MCF 10A (cell line): ENCODE measurements at regions of chr12 and their contacts with region 1.

Region 1: DNA sequence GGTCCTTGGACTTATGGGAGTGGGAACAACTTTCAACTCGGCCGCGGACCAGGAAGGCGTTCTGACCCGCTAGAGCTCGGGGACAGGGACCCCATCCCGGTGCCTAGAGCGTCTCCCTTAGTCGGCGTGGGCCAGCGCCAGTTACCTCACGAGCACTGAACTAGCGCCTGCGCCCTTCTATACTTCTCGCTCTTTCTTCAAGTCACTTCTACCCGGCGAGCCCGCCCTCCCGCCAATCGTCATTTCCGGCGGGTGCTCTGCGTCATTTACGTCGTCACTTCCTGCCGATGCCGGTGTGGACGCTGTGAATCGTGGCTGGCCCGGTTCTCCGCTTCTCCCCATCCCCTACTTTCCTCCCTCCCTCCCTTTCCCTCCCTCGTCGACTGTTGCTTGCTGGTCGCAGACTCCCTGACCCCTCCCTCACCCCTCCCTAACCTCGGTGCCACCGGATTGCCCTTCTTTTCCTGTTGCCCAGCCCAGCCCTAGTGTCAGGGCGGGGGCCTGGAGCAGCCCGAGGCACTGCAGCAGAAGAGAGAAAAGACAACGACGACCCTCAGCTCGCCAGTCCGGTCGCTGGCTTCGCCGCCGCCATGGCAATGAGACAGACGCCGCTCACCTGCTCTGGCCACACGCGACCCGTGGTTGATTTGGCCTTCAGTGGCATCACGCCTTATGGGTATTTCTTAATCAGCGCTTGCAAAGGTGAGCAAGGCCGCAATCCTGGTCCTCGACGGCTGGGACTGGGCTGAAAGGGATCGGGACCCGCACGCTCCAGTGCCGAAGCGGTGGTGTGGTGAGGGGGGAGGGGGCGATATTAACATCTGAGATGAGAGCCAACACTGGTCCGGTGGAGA is at the start of gene STRAP:
- DNase-seq: peak; percentile 96
- H3K4me3 Mint-ChIP-seq: peak within 1 kb of the TSS; percentile 92
- H3K27ac Mint-ChIP-seq: peak within 1 kb of the TSS; percentile 95
- H3K4me1 Mint-ChIP-seq: peaks cover 26% of the 10 kb centered on the region
- H3K27me3 Mint-ChIP-seq: no peaks in the 10 kb centered on the region
- CTCF ChIP-seq: no peak
- total RNA-seq, gene STRAP: 203 and 233 TPM in 2 replicates

Region 2: DNA sequence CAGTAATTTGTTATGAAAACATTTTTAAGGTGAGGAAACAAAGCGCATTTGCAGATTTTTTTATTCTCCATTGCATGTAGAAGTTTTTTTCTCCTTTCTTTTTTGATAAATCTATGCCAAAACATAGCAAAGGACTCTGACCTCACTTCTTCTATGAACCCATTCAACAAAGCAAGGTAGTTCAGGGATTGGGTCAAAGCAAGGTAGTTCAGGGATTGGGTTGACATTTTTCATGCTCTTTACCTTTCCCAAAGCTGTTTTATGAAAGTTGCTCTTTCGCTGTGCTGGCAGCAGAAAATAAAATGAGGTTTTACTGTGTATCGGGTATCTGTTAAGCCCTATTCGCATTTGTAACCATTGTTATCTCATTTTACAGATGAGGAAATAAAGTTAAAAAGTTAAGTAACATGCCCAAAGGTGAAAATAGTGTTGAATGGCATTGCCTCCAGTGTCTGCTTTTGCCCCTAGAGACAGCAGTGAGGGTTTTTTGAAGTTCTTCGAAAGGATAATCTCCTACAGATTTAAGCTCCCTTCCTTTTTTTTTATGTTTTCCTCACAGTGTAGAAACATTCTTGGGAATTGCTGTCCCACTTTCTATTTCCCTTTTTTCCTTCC is 10.4 kb after region 1 on chr12:
- CTCF ChIA-PET with region 1: interaction called, 19 read pairs
- POLR2A ChIA-PET with region 1: interaction called, 25 read pairs
- intact Hi-C with region 1: no loop called
- DNase-seq: no peak
- H3K4me3 Mint-ChIP-seq: no peak overlapping the region
- H3K27ac Mint-ChIP-seq: no peak overlapping the region
- H3K4me1 Mint-ChIP-seq: peaks cover 14% of the 10 kb centered on the region
- H3K27me3 Mint-ChIP-seq: no peaks in the 10 kb centered on the region
- CTCF ChIP-seq: no peak

Region 3: DNA sequence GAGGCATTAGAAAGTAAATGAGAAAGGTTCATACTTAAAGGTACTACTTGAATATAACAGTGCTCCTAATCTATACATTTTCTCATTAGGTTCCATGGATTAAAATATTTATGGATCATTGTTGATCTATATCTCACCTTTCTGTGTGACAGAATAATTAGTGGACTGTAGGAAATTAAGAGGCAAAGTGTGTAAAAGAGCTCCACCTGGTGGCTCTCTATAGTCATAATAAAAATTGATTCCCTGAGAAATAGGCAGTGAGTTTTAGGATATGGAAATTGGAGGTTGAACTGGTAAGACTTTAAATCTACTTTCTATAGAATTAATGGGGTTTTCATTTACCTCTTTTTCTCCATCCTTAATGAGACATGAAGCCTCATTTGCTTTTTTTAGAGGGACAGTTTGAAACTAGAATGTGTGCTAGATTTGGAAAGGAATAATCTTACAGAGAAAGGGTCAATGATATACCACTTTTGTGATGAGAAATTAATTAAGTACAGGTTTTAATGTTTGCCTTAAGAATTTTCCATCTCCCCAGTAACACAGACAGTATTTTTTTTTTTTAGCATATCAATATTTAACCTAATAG is 17.0 kb after region 1 on chr12:
- CTCF ChIA-PET with region 1: interaction called, 19 read pairs
- POLR2A ChIA-PET with region 1: interaction called, 25 read pairs
- intact Hi-C with region 1: no loop called
- DNase-seq: peak; percentile 59
- H3K4me3 Mint-ChIP-seq: no peak overlapping the region
- H3K27ac Mint-ChIP-seq: peak overlapping the region; percentile 16
- H3K4me1 Mint-ChIP-seq: no peaks in the 10 kb centered on the region
- H3K27me3 Mint-ChIP-seq: no peaks in the 10 kb centered on the region
- CTCF ChIP-seq: peak; percentile 59

Region 4: DNA sequence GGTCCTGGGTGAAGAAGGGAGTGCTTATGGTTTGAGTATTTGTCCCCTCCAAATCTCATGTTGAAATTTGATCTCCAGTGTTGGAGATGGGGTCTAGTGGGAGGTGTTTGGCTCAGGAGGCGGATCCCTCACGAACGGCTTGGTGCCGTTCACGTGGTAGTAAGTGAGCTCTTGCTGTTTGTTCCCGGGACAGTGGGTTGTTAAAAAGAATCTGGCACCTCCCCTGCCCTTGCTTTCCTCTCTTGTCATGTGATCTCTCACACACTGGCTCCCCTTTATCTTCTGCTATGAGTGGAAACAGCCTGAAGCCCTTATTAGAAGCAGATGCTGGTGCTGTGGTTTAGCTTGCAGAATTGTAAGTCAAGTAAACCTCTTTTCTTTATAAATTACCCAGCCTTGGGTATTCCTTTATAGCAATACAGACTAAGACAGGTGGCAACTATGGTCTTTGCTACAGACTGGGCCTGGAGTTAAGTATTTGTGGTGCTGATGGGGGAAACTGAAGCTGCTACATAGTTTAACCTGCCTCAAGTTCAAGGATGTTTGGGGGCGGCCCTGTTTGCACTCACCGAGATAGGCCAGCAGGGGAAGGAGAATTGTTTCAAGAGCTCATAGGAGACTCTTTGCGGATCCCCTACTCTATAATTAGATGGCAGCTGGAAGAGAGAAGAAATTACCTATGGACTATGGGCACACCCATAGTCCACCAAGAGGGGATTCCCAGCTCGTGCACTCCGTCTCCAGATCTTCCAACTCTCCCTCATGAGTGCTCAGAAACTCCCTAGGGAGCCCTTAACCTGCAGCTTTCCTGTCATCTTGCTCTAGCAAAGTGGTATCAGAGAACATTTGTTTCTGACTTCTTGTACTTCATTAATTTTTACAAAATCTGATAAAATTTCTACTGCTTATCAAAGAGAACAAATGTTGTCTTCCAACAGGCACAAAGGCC is 230.5 kb after region 1 on chr12:
- CTCF ChIA-PET with region 1: no interaction called
- POLR2A ChIA-PET with region 1: no interaction called
- intact Hi-C with region 1: no loop called
- DNase-seq: peak; percentile 6
- H3K4me3 Mint-ChIP-seq: no peak overlapping the region
- H3K27ac Mint-ChIP-seq: no peak overlapping the region
- H3K4me1 Mint-ChIP-seq: no peaks in the 10 kb centered on the region
- H3K27me3 Mint-ChIP-seq: peaks cover 13% of the 10 kb centered on the region
- CTCF ChIP-seq: no peak

Region 5: GRCh38 chr12:16857456-16857923 is 975.1 kb after region 1 on chr12:
- CTCF ChIA-PET with region 1: no interaction called
- POLR2A ChIA-PET with region 1: no interaction called
- intact Hi-C with region 1: no loop called
- DNase-seq: no peak
- H3K4me3 Mint-ChIP-seq: no peak overlapping the region
- H3K27ac Mint-ChIP-seq: no peak overlapping the region
- H3K4me1 Mint-ChIP-seq: no peaks in the 10 kb centered on the region
- H3K27me3 Mint-ChIP-seq: peaks cover 29% of the 10 kb centered on the region
- CTCF ChIP-seq: no peak